ENCODE measurements at regions of chr6 and their contacts with region 1.

Region 1: DNA sequence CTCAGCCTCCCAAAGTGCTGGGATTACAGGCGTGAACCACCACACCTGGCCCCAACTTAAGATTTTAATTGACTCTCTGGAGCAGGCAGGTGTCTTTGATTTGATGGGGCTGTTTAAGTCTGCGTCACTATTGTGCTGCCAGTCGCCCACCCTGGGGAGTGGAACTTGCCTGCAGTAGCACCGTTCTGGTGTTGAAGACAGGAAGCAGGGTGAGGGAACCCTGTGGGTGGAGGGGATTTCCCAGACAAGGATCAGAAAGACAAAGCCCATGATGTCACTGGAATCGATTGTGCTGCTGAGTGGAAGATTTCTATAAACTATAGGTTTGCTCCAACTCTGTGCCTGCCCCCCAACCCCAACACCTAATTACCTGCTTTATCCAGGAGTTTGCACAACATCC is 11.0 kb downstream of the ALDH8A1 start:
- DNase-seq: no peak
- ATAC-seq: peak; percentile 54
- H3K4me3 Mint-ChIP-seq: no peak overlapping the region
- H3K27ac Mint-ChIP-seq: no peak overlapping the region
- H3K4me1 Mint-ChIP-seq: peaks cover 3% of the 10 kb centered on the region
- H3K27me3 Mint-ChIP-seq: no peaks in the 10 kb centered on the region
- CTCF ChIP-seq: no peak

Region 2: DNA sequence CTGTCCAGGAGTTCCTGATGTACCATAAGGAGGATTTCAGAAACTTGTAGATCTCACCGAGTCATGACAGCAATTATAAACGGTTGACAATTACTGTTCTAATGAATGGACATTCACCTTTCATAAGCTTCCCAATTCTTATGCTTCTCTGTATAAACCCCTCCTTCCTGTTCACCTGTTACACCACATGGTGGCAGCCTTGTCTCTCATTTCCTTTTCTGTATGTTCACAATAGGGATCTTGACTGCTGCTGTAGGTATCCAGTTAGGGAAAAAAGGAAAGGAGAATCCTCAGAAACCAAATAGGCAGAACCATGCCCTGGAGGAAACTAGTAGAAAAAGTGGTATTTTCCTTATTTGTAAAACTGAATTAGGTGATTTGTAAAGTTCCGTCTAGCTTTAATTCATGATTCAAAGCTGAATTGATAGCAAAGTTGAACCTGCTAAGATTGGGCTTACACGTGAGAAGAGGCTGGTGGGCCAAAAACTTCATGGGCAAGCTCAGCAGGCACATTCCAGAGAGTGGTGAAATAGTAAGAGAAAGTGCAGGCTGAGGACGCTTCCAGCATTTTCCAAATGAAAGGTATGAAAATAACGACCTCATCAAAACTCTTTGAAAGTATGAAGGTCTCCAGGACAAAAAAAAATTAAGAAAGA is 1014.8 kb before region 1 on chr6:
- CTCF ChIA-PET with region 1: interaction called, 17 read pairs
- POLR2A ChIA-PET with region 1: no interaction called
- intact Hi-C with region 1: loop called (anchors 5 kb)
- DNase-seq: no peak
- ATAC-seq: peak; percentile 88
- H3K4me3 Mint-ChIP-seq: no peak overlapping the region
- H3K27ac Mint-ChIP-seq: no peak overlapping the region
- H3K4me1 Mint-ChIP-seq: no peaks in the 10 kb centered on the region
- H3K27me3 Mint-ChIP-seq: peaks cover 22% of the 10 kb centered on the region
- CTCF ChIP-seq: peak; percentile 56

Region 3: GRCh38 chr6:134123666-134124208 is 815.2 kb before region 1 on chr6:
- CTCF ChIA-PET with region 1: interaction called, 80 read pairs
- POLR2A ChIA-PET with region 1: no interaction called
- intact Hi-C with region 1: loop called (anchors 1 kb)
- DNase-seq: no peak
- ATAC-seq: peak; percentile 52
- H3K4me3 Mint-ChIP-seq: no peak overlapping the region
- H3K27ac Mint-ChIP-seq: no peak overlapping the region
- H3K4me1 Mint-ChIP-seq: no peaks in the 10 kb centered on the region
- H3K27me3 Mint-ChIP-seq: peaks cover 2% of the 10 kb centered on the region
- CTCF ChIP-seq: peak; percentile 62

Region 4: GRCh38 chr6:134161036-134161435 is 777.9 kb before region 1 on chr6:
- CTCF ChIA-PET with region 1: interaction called, 80 read pairs
- POLR2A ChIA-PET with region 1: no interaction called
- intact Hi-C with region 1: loop called (anchors 1 kb)
- DNase-seq: no peak
- ATAC-seq: no peak
- H3K4me3 Mint-ChIP-seq: no peak overlapping the region
- H3K27ac Mint-ChIP-seq: no peak overlapping the region
- H3K4me1 Mint-ChIP-seq: no peaks in the 10 kb centered on the region
- H3K27me3 Mint-ChIP-seq: no peaks in the 10 kb centered on the region
- CTCF ChIP-seq: no peak

Region 5: DNA sequence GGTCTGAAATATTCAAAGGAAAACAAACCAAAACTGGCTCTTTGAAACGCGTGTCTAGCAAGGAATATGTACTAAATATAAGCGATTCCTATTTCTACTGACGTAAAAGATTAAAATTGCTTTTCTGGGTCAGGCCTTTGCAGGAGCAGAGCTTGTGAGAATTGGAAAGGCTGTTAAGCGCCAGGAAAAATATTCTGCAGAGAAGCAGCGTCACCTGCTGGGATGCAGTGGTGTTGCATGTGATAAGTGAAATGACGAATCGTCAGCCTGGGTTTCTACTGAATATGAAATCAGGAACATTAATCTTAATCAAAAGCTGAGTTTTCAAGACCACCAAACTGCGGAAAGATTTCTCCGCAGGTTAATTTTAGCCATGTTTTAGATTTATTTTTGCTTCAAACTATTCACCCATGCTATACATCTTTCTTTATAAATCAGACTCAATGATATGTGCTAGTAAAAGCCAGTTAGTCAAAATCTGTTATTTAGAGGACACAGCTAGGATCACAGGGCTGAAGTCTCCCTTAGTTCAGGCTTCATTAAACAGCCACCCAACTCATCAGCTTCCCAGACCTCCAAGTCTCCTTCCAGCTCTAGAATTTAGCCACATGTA is 56.4 kb before region 1 on chr6:
- CTCF ChIA-PET with region 1: interaction called, 4 read pairs
- POLR2A ChIA-PET with region 1: no interaction called
- intact Hi-C with region 1: loop called (anchors 2 kb)
- DNase-seq: peak; percentile 35
- ATAC-seq: peak; percentile 57
- H3K4me3 Mint-ChIP-seq: no peak overlapping the region
- H3K27ac Mint-ChIP-seq: no peak overlapping the region
- H3K4me1 Mint-ChIP-seq: no peaks in the 10 kb centered on the region
- H3K27me3 Mint-ChIP-seq: peaks cover 11% of the 10 kb centered on the region
- CTCF ChIP-seq: peak; percentile 84

Measured in activated B cell treated with CpG ODN at 0.5 μM for 24 hours (primary cell).